Mammary epithelial cell (primary cell): ENCODE measurements at regions of chr19 and their contacts with region 1.

Region 1: DNA sequence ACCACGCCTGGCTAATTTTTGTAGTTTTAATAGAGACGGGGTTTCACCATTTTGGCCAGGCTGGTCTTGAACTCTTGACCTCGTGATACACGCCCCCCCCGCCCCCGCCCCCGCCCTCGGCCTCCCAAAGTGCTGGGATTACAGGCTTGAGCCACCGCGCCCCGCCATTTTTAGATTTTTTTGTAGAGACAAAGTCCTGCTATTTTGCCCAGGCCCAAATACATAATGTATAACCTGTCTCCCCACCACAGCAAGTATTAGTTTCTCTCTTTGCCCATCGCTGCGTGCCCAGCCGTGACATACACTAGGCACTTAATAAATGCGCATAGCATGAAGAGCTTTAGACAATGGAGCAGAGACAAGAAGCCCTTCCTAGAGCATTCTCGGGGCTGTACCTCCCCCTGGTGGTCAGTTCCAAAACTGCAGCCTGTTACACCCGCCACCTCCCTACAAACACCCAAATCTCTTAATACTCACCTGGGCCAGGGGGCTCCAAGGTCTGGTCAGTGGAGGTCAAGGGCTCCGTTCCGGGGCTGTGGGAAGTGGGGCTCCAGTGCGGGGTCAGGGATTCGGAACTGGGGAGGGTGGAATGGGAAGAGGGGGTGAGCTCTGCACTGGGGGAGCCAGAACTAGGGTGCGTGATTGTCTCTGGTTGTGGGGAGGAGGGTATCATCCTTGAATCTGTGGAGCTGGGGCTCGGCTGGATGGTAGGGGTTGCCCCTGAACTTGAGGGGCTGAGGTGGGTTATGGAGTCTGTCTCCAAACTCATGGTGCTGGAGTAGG is 22.5 kb downstream of the IQCN start:
- DNase-seq: peak; percentile 57
- H3K4me3 ChIP-seq: no peak overlapping the region
- H3K27ac ChIP-seq: no peak overlapping the region
- H3K4me1 ChIP-seq: peaks cover 5% of the 10 kb centered on the region
- H3K27me3 ChIP-seq: no peaks in the 10 kb centered on the region
- CTCF ChIP-seq: peak; percentile 85 to 92

Region 2: GRCh38 chr19:16702118-16702517 is 1549.7 kb before region 1 on chr19:
- CTCF ChIA-PET with region 1: interaction called, 16 read pairs
- dilution Hi-C with region 1: no loop called
- in situ Hi-C with region 1: no loop called
- intact Hi-C with region 1: no loop called
- DNase-seq: peak; percentile 99
- H3K4me3 ChIP-seq: no peak overlapping the region
- H3K27ac ChIP-seq: peak overlapping the region; percentile 42
- H3K4me1 ChIP-seq: peaks cover 7% of the 10 kb centered on the region
- H3K27me3 ChIP-seq: no peaks in the 10 kb centered on the region
- CTCF ChIP-seq: no peak

Region 3: GRCh38 chr19:18007044-18007916 is 244.5 kb before region 1 on chr19:
- CTCF ChIA-PET with region 1: no interaction called
- dilution Hi-C with region 1: no loop called
- in situ Hi-C with region 1: no loop called
- intact Hi-C with region 1: loop called (anchors 1 kb)
- DNase-seq: peak; percentile 69
- H3K4me3 ChIP-seq: peak overlapping the region; percentile 23 to 43 (median 39)
- H3K27ac ChIP-seq: peak overlapping the region; percentile 9
- H3K4me1 ChIP-seq: peaks cover 12% of the 10 kb centered on the region
- H3K27me3 ChIP-seq: no peaks in the 10 kb centered on the region
- CTCF ChIP-seq: peak; percentile 95 to 98

Region 4: DNA sequence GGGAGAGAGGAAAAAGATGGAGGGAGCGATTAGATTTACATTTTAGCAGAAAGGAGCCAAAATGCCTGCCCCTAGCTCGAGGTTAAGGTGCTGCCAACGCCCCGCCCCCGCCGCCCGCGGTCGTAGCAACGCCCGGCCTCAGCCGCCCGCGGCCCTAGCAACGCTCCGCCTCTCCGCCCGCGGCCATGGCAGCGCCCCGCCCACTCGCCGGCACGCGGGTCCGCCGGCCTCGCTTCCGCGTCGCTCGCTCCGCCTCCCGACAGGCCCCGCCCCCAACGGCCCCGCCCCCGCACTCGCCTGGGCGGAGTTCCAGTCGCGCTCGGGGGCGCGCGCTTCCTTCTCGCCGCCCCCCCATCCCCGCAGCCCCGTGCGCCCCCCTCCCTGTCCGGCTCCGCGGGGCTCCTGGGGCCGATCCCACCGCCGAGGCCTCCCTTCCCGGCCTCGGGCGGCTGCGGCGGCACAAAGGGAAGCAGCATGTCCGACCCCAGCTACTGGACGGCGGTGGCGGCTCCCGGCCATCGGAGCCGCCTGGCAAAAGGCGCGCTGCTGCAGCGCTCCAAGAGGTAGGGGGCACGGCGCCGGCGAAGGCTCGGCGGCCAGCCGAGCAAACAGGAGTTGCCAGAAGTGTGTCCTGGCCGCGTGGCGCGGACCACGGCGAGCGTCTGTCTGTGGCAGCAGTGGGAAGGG is 133.9 kb before region 1 on chr19:
- CTCF ChIA-PET with region 1: interaction called, 5 read pairs
- dilution Hi-C with region 1: no loop called
- in situ Hi-C with region 1: loop called (anchors 10 kb)
- intact Hi-C with region 1: loop called (anchors 1 kb)
- DNase-seq: peak; percentile 54
- H3K4me3 ChIP-seq: peak overlapping the region; percentile 41 to 66 (median 66)
- H3K27ac ChIP-seq: no peak overlapping the region
- H3K4me1 ChIP-seq: peaks cover 21% of the 10 kb centered on the region
- H3K27me3 ChIP-seq: no peaks in the 10 kb centered on the region
- CTCF ChIP-seq: no peak

Region 5: DNA sequence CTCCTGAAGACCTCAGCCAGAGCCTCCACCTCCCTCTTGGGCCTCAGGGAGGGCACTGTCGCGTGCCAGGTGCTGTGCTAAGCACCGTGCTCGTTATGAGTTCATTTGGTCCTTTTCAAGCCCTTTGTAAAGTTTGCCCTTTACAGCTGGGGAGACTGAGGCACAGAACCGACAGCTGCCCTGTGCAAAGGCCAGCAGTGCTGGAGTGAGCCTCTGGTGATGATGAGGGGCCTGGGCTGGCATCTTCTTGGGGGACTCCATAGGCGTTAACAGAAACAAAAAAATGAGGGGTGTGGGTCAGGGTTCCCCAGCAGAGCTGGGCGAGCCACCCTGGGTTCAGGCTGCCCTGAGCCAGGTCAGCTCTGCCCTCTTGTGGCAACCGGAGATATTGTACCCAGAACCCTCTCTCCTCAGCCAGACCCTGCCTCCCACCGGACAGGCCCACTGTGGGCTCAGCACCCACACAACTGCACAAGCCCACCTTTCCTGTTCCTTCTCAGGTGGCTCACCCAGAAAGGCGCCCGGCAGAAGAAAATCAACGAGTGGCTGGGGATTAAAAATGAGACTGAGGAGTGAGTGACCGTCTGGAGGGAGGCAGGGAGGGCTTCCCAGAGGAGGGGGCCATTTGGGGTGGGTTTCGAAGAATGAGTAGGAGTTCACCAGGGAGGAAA is 83.7 kb before region 1 on chr19:
- CTCF ChIA-PET with region 1: no interaction called
- dilution Hi-C with region 1: no loop called
- in situ Hi-C with region 1: no loop called
- intact Hi-C with region 1: loop called (anchors 1 kb)
- DNase-seq: no peak
- H3K4me3 ChIP-seq: no peak overlapping the region
- H3K27ac ChIP-seq: no peak overlapping the region
- H3K4me1 ChIP-seq: no peaks in the 10 kb centered on the region
- H3K27me3 ChIP-seq: no peaks in the 10 kb centered on the region
- CTCF ChIP-seq: peak; percentile 66 to 76

Region 6: DNA sequence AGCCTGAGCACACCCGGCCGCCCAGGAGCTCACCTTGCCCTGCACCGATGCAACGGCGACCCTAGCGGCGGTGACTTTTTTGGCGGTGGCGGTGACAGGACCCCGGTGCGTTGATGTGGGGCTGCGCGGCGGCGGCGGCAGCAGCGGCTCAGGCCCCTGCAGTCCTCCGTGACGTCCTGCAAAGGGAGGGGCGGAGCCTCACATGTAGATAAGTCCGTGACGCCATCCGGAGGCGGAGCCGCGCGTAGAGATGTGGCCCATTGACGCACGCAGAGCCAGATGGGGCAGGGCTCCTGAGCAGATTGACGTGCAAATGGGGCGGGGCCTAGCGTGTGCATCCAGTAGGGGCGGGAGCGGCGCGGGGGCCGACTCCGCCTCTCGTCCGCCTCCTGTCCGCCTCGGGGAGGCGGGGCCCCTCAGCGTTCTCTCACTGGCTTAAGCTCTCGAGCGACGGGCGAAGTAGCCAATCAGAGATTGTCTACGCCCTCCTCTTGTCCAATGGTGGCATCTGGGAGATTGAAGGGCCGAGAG is 47.9 kb before region 1 on chr19 and contains the start of gene RAB3A:
- CTCF ChIA-PET with region 1: interaction called, 8 read pairs
- dilution Hi-C with region 1: no loop called
- in situ Hi-C with region 1: no loop called
- intact Hi-C with region 1: loop called (anchors 1 kb)
- DNase-seq: peak; percentile 100
- H3K4me3 ChIP-seq: peak within 1 kb of the TSS; percentile 62 to 89 (median 70)
- H3K27ac ChIP-seq: peak within 1 kb of the TSS; percentile 42
- H3K4me1 ChIP-seq: peaks cover 21% of the 10 kb centered on the region
- H3K27me3 ChIP-seq: no peaks in the 10 kb centered on the region
- CTCF ChIP-seq: no peak
- total RNA-seq, gene RAB3A: 0.33 to 1.8 TPM